ENCODE measurements at regions of chr17 and their contacts with region 1.

Region 1: GRCh38 chr17:45218895-45219661 is 2.6 kb upstream of the FMNL1 start:
- DNase-seq: peak; percentile 95
- ATAC-seq: peak; percentile 54
- H3K4me3 Mint-ChIP-seq: peak overlapping the region; percentile 38
- H3K27ac Mint-ChIP-seq: no peak overlapping the region
- H3K4me1 Mint-ChIP-seq: peaks cover 7% of the 10 kb centered on the region; the same call in 1 of the 2 replicates
- H3K27me3 Mint-ChIP-seq: peaks cover 60% of the 10 kb centered on the region
- CTCF ChIP-seq: peak; percentile 98

Region 2: GRCh38 chr17:45148183-45149036 is 70.7 kb before region 1 on chr17 and contains the start of gene HEXIM1:
- CTCF ChIA-PET with region 1: interaction called, 12 read pairs
- POLR2A ChIA-PET with region 1: interaction called, 4 read pairs
- DNase-seq: peak; percentile 99
- ATAC-seq: peak; percentile 75
- H3K4me3 Mint-ChIP-seq: peak within 1 kb of the TSS; percentile 98
- H3K27ac Mint-ChIP-seq: peak within 1 kb of the TSS; percentile 100
- H3K4me1 Mint-ChIP-seq: peaks cover 34% of the 10 kb centered on the region
- H3K27me3 Mint-ChIP-seq: peaks cover 5% of the 10 kb centered on the region; the same call in 1 of the 2 replicates
- CTCF ChIP-seq: no peak
- total RNA-seq, gene HEXIM1: 29.6 to 36.9 TPM (median 35.2 TPM) in 3 replicates

Region 3: GRCh38 chr17:45235416-45236281 is 16.6 kb after region 1 on chr17:
- CTCF ChIA-PET with region 1: interaction called, 109 read pairs
- POLR2A ChIA-PET with region 1: interaction called, 4 read pairs
- DNase-seq: peak; percentile 94
- ATAC-seq: peak; percentile 69
- H3K4me3 Mint-ChIP-seq: no peak overlapping the region
- H3K27ac Mint-ChIP-seq: no peak overlapping the region
- H3K4me1 Mint-ChIP-seq: peaks cover 9% of the 10 kb centered on the region
- H3K27me3 Mint-ChIP-seq: peaks cover 63% of the 10 kb centered on the region
- CTCF ChIP-seq: peak; percentile 81

Region 4: DNA sequence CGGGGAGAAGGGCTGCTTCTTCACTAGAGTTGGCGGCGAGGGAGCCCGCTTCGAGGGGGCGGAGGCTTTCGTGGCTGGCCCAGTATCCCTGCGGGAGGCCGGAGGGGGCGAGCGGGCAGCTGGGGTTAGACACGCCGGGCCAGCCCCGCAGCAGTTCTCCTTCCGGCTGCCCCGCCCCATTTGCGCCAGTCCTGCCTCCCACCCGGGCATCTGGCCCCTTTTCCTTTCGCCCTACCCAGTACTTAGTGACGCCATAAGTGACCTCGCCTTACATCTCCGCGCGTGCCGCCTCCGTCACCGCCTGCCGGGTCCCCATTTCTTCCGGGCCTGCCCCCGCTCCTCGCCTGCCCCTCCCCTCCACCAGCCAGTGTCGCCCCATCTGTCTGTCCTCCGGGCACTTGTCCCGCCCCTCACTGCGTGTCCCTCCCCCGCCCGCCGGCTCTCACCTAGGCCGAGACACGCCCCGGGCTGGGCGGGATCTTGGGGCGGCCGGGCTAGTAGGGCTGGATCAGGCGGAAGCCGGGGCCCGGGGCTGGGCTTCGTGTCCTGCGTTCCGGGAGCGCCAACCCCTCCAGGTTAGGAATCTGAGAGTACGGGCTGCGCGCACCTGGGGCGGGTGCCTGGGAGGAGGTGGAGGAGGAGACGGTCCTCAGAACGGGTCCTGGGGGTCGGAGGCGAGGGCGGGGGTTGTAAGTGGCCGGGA is 28.5 kb after region 1 on chr17:
- CTCF ChIA-PET with region 1: interaction called, 30 read pairs
- POLR2A ChIA-PET with region 1: no interaction called
- DNase-seq: peak; percentile 99
- ATAC-seq: peak; percentile 87
- H3K4me3 Mint-ChIP-seq: peak overlapping the region; percentile 83
- H3K27ac Mint-ChIP-seq: peak overlapping the region; percentile 80
- H3K4me1 Mint-ChIP-seq: peaks cover 21% of the 10 kb centered on the region
- H3K27me3 Mint-ChIP-seq: peaks cover 2% of the 10 kb centered on the region
- CTCF ChIP-seq: no peak

Region 5: DNA sequence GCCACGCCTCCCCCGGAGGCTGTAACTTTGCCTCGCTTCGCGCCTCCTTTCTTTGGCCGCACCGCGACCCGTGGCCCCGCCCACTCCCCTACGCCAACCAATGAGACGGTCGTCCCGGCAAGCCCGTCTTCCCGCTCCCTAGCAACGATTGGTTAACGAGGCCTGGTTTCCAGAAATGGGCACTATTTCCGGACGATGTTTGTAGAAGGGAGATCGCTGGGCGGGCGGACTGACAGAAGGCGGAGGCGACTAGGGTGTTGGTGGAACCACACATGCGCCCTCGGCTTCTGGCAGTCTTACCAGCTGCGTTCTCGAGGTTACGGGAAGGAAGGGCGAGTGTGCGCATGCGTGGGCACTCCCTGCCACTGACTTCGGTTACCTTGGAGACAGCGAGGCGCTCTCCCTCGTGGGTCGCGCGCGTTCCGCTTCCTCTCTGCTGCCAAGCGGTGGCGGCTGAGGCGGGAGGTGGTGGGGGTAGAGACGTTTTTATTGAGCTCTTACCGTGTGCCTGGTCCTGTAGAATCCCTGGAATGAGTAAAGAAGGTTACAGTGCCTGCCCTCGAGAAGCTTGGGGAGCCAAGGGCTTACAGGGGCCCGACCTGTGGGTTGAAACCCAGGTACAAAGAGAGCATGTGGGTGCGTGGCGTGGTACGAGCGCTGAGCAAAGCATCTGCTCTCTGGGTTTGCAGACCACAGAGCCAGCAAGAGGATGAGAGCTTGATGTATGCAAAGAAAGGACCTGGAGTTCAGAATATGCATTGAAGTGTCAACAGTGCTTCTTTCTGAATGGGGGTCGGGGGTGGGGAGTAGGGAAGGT is 98.2 kb after region 1 on chr17:
- CTCF ChIA-PET with region 1: interaction called, 10 read pairs
- POLR2A ChIA-PET with region 1: interaction called, 3 read pairs
- DNase-seq: peak; percentile 100
- ATAC-seq: peak; percentile 92
- H3K4me3 Mint-ChIP-seq: peak overlapping the region; percentile 85
- H3K27ac Mint-ChIP-seq: peak overlapping the region; percentile 90
- H3K4me1 Mint-ChIP-seq: peaks cover 22% of the 10 kb centered on the region
- H3K27me3 Mint-ChIP-seq: peaks cover 37% of the 10 kb centered on the region
- CTCF ChIP-seq: no peak

Region 6: GRCh38 chr17:45394913-45395568 is 176.0 kb after region 1 on chr17:
- CTCF ChIA-PET with region 1: interaction called, 14 read pairs
- POLR2A ChIA-PET with region 1: no interaction called
- DNase-seq: peak; percentile 88
- ATAC-seq: peak; percentile 81
- H3K4me3 Mint-ChIP-seq: peak overlapping the region; percentile 34
- H3K27ac Mint-ChIP-seq: no peak overlapping the region
- H3K4me1 Mint-ChIP-seq: peaks cover 15% of the 10 kb centered on the region
- H3K27me3 Mint-ChIP-seq: peaks cover 3% of the 10 kb centered on the region; the same call in 1 of the 2 replicates
- CTCF ChIP-seq: peak; percentile 71

Measured in WTC11 (cell line).